ENCODE measurements at regions of chr16 and their contacts with region 1.

Region 1: GRCh38 chr16:75519881-75520280 is 16.0 kb downstream of the CHST5 start:
- DNase-seq: no peak
- ATAC-seq: no peak
- H3K4me3 ChIP-seq: no peak overlapping the region
- H3K27ac ChIP-seq: no peak overlapping the region
- H3K4me1 ChIP-seq: peaks cover 0 to 6% of the 10 kb centered on the region in 2 donors
- H3K27me3 ChIP-seq: no peaks in the 10 kb centered on the region
- CTCF ChIP-seq: no peak
- POLR2A ChIP-seq: no peak

Region 2: DNA sequence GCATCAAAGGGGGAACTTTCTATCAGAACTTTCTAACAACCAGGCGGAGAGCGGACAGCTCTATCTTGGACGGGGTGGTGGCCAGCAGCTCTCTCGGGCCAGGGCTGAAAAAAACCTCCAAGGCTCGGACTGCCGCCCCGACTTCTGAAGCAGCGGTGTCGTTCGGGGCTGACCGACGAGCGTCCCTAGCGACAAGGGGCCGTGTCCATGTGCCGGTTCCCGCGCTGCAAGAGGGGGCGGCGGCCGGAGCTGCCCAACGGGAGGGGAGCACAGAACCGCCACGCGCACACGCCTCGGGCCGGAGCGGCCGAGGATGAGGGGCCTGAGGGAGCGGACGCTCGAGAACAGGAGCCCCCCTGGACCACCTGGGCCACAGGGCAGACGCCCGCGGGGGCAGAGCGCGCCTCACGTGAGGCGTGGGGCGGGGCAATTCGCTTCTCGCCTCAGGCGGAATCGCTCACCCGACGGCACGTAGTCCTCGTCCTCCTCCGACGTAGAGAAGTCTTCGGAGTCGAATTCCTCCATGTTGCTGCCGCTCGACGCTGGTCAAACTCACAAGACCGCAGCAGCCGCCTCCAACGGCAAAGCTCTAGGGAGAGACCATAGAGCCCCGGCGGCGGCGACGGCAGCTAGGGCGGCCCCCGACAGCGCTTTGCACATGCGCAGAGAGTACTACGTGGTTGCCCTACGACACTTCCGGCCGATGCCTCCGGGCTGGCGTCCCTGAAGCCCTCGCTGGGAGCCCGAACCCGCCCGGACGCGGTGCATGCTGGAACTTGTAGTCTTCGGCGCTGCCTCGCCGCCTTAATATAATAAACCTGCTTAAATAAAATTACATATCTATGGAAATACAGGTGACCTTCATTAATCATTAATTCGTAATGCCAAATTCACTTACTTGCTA is 86.8 kb before region 1 on chr16 and contains the start of gene CFDP1:
- in situ Hi-C with region 1: no loop called
- intact Hi-C with region 1: loop called (anchors 1 kb)
- DNase-seq: peak; percentile 93 to 94
- ATAC-seq: peak; percentile 93 to 96
- H3K4me3 ChIP-seq: peak within 1 kb of the TSS; percentile 88 to 100 (median 95)
- H3K27ac ChIP-seq: peak within 1 kb of the TSS; percentile 80 to 99 (median 96)
- H3K4me1 ChIP-seq: peaks cover 15 to 17% of the 10 kb centered on the region in 2 donors
- H3K27me3 ChIP-seq: no peaks in the 10 kb centered on the region
- CTCF ChIP-seq: peak in 2 of 5 experiments; percentile 25 to 28
- POLR2A ChIP-seq: peak; percentile 71 to 78
- total RNA-seq, gene CFDP1: 20.4 to 28.6 (median 24.2) TPM

Region 3: DNA sequence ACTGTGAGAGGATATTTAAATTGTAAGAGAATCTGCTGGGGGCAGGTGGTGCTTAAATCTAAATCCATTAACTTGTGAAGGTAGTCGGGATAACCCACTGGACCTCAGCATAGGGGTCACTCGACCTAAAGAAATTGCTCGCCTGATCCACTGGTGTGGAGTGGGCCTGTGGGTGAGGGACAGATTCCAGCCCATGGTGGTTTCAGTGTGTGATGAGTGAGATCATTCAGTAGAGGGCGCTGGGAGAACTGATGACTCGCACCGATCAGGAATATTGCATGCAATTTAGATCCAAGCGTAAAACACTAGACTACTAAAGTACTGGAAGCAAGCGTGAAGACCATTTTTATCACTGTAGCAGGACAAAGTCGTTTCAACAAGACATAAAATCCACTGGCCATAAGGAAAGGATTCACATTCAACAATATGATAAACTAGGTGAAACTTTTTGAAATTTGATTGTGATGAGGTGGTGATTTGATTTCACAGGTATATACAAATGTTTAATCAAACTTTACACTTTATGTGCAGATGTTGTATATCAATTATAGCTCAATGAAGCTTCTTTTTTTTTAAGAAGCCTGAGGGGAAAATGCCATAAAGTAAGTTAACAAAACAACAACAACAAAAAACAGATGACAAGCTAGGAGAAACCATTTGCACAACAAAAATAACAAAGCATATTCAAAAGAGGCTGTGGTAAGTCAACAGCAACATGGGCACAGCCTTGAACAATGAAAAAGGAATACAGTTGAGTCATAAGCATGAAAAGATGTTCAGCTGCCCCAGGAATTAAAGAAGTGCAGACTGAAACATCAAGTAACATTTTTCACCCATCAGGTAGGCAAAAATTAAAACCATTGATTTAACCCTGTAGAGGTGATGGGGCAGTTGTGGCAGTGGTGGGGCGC is 47.9 kb before region 1 on chr16:
- in situ Hi-C with region 1: loop called in 1 of 4 experiments (anchors 10 kb)
- intact Hi-C with region 1: loop called (anchors 1 kb)
- DNase-seq: peak; percentile 37 to 39
- ATAC-seq: peak; percentile 97 to 99
- H3K4me3 ChIP-seq: no peak overlapping the region
- H3K27ac ChIP-seq: no peak overlapping the region
- H3K4me1 ChIP-seq: no peaks in the 10 kb centered on the region
- H3K27me3 ChIP-seq: no peaks in the 10 kb centered on the region
- CTCF ChIP-seq: peak; percentile 58 to 76 (median 72)
- POLR2A ChIP-seq: no peak

Region 4: DNA sequence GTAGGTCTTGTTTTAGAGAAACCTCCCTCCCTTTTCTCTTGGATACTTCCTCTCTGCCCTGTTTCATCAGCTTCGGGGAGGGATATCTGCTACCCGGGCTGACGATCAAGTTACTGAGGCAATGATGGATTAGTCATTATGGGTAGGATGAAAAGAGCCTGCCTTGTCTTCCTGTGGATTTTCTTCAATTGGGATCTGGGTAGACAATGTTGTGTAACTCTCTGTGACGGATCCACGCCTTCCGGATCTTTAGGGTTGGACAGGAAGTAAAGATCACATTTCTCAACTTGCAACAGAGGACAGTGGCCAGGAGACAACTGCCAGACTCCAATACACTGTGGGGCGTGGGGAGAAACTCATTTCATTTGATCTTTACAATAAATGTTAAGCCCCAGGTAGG is 13.3 kb before region 1 on chr16:
- in situ Hi-C with region 1: no loop called
- intact Hi-C with region 1: no loop called
- DNase-seq: peak; percentile 61 to 71
- ATAC-seq: peak; percentile 89 to 95
- H3K4me3 ChIP-seq: peak overlapping the region in 1 of 4 donors; percentile 6
- H3K27ac ChIP-seq: peak overlapping the region; percentile 24 to 74 (median 50)
- H3K4me1 ChIP-seq: peaks cover 10 to 19% of the 10 kb centered on the region in 2 donors
- H3K27me3 ChIP-seq: no peaks in the 10 kb centered on the region
- CTCF ChIP-seq: no peak
- POLR2A ChIP-seq: no peak

Region 5: DNA sequence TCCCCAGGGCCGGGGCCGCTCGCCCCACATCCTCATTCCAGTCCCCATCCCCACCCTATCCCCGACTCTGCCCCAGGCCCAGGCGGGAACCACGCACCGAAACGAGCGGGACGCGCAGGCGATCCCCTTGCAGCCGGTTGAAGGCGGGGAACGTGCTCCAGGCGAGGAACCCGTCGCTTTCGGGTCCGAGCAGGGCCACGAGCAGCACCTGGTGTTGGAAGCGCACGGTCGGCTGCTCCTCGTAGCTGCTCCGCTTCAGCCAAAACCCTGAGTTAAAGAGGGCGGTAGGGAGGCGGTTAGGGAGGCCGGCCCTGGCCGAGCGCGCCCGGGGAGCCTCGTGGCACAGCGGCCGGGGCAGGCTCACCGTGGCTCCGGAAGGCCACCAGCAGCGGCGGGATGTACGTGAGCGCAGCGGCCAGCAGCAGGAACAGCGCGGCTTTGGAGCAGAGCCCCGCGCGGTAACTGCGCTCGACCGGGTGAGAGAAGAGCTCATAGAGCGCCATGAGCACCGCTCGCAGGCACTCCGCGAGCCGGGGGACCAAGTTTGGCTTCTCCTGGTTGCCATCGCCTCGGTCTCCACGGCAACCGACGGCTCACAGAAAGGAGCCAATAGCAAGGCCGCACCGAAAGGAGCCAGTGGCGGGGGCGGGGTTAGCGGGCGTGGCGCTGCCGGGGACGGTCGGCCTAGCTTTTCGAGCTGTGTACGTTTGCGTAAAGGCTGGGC is 36.0 kb after region 1 on chr16 and contains the start of gene TMEM231:
- in situ Hi-C with region 1: no loop called
- intact Hi-C with region 1: loop called (anchors 5 kb)
- DNase-seq: peak; percentile 95
- ATAC-seq: peak; percentile 93
- H3K4me3 ChIP-seq: peak within 1 kb of the TSS; percentile 76 to 84 (median 82)
- H3K27ac ChIP-seq: peak within 1 kb of the TSS; percentile 76 to 87 (median 82)
- H3K4me1 ChIP-seq: peaks cover 8 to 14% of the 10 kb centered on the region in 2 donors
- H3K27me3 ChIP-seq: no peaks in the 10 kb centered on the region
- CTCF ChIP-seq: no peak
- POLR2A ChIP-seq: peak; percentile 39 to 52
- total RNA-seq, gene TMEM231: 0.76 to 2.3 (median 1.7) TPM

Region 6: GRCh38 chr16:75566040-75566810 is 46.3 kb after region 1 on chr16 and contains the start of gene GABARAPL2:
- in situ Hi-C with region 1: no loop called
- intact Hi-C with region 1: loop called (anchors 2 kb)
- DNase-seq: peak; percentile 51 to 65
- ATAC-seq: peak; percentile 91 to 95
- H3K4me3 ChIP-seq: peak within 1 kb of the TSS; percentile 89 to 98 (median 96)
- H3K27ac ChIP-seq: peak within 1 kb of the TSS; percentile 81 to 92 (median 86)
- H3K4me1 ChIP-seq: peaks cover 34 to 54% of the 10 kb centered on the region in 2 donors
- H3K27me3 ChIP-seq: no peaks in the 10 kb centered on the region
- CTCF ChIP-seq: no peak
- POLR2A ChIP-seq: peak; percentile 90 to 91
- total RNA-seq, gene GABARAPL2: 92.2 to 137 (median 117) TPM

Region 7: GRCh38 chr16:75576384-75576811 is 56.5 kb after region 1 on chr16:
- in situ Hi-C with region 1: no loop called
- intact Hi-C with region 1: no loop called
- DNase-seq: no peak
- ATAC-seq: no peak
- H3K4me3 ChIP-seq: no peak overlapping the region
- H3K27ac ChIP-seq: no peak overlapping the region
- H3K4me1 ChIP-seq: peaks cover 0 to 3% of the 10 kb centered on the region in 2 donors
- H3K27me3 ChIP-seq: no peaks in the 10 kb centered on the region
- CTCF ChIP-seq: no peak
- POLR2A ChIP-seq: no peak

Region 8: DNA sequence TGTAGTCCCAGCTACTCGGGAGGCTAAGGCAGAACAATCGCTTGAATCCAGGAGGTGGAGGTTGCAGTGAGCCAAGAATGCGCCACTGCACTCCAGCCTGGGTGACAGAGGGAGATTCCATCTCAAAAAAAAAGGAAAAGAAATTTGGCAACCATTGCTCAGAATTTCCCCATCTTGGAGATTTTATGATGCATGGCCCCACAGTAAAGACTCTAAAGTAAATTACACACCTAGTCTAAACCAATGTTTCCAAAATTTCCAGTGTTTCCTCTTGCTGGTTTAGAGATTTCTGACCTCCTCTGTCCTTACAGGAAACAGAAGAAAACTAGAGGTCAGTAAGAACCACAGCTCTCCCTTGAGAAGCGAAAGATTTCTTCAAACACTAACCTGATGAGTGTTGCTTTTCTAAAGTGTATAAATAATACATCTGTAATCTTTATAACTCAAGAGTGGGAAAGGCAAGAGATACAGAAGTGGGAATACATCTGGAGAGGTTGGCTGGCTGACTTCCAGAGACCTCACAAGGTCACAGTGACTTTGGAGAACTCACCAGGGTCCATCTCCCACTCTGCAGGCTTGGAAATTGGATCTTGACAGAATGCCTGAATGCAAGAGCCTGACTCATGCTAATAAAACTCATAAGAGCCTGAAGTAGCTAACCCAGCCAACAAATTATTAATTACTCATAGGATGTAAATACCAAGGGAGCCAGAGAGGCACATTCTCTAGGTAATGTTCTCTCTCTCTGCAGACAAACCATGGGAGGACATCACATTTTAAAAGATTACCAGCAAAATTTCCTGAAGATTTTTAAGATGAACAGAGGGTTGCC is 94.4 kb after region 1 on chr16:
- in situ Hi-C with region 1: no loop called
- intact Hi-C with region 1: no loop called
- DNase-seq: no peak
- ATAC-seq: no peak
- H3K4me3 ChIP-seq: no peak overlapping the region
- H3K27ac ChIP-seq: no peak overlapping the region
- H3K4me1 ChIP-seq: no peaks in the 10 kb centered on the region
- H3K27me3 ChIP-seq: no peaks in the 10 kb centered on the region
- CTCF ChIP-seq: no peak
- POLR2A ChIP-seq: no peak

Region 9: DNA sequence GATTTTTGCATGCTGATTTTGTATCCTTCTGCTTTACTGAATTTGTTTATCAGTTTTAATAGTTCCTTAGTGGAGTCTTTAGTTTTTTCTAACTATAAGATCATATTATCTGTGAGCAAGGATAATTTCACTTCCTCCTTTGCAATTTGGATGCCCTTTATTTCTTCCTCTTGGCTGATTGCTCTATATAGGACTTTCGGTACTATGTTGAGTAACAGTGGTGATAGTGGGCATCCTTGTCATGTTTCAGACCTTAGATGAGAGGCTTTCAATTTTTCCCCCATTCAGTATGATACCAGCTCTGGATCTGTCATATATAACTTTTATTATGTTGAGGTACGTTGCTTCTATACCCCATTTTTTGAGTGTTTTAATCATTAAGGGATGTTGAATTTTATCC is 532.8 kb after region 1 on chr16:
- in situ Hi-C with region 1: no loop called
- intact Hi-C with region 1: no loop called
- DNase-seq: no peak
- ATAC-seq: no peak
- H3K4me3 ChIP-seq: no peak overlapping the region
- H3K27ac ChIP-seq: no peak overlapping the region
- H3K4me1 ChIP-seq: no peaks in the 10 kb centered on the region
- H3K27me3 ChIP-seq: no peaks in the 10 kb centered on the region
- CTCF ChIP-seq: no peak
- POLR2A ChIP-seq: no peak